ENCODE measurements at regions of chr2 and their contacts with region 1.

Region 1: GRCh38 chr2:159462946-159463345 is 153.4 kb downstream of the BAZ2B start:
- DNase-seq: no peak
- H3K4me3 Mint-ChIP-seq: no peak overlapping the region
- H3K27ac Mint-ChIP-seq: no peak overlapping the region
- H3K4me1 Mint-ChIP-seq: peaks cover 11% of the 10 kb centered on the region
- H3K27me3 Mint-ChIP-seq: no peaks in the 10 kb centered on the region
- CTCF ChIP-seq: no peak

Region 2: DNA sequence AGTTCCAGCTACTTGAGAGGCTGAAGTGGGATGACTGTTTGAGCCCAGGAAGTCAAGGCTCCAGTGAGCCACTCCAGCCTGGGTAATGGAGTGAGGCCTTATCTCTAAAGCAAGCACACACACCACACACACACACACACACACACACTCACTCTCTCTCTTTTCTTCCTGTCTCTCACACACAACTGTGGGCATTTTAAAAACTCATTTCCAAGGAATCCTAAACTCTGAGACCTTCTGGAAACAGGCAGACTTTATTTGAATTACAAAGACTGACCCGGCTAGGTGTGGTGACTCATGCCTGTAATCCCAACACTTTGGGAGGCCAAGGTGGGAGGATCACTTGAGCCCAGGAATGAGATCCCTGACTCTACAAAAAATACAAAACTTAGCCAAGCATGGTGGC is 197.8 kb before region 1 on chr2:
- CTCF ChIA-PET with region 1: interaction called, 11 read pairs
- intact Hi-C with region 1: no loop called
- DNase-seq: no peak
- H3K4me3 Mint-ChIP-seq: no peak overlapping the region
- H3K27ac Mint-ChIP-seq: peak overlapping the region; percentile 16
- H3K4me1 Mint-ChIP-seq: peaks cover 9% of the 10 kb centered on the region
- H3K27me3 Mint-ChIP-seq: no peaks in the 10 kb centered on the region
- CTCF ChIP-seq: no peak

Region 3: GRCh38 chr2:159728629-159729028 is 265.7 kb after region 1 on chr2:
- CTCF ChIA-PET with region 1: no interaction called
- intact Hi-C with region 1: no loop called
- DNase-seq: no peak
- H3K4me3 Mint-ChIP-seq: no peak overlapping the region
- H3K27ac Mint-ChIP-seq: no peak overlapping the region
- H3K4me1 Mint-ChIP-seq: peaks cover 15% of the 10 kb centered on the region
- H3K27me3 Mint-ChIP-seq: no peaks in the 10 kb centered on the region
- CTCF ChIP-seq: no peak